AG04450 (cell line): ENCODE measurements at regions of chr6 and their contacts with region 1.

Region 1: GRCh38 chr6:11653028-11653583 is 115.6 kb downstream of the TMEM170B start:
- DNase-seq: peak; percentile 83
- H3K4me3 ChIP-seq: no peak overlapping the region
- H3K27ac ChIP-seq: peak overlapping the region; percentile 89
- H3K27me3 ChIP-seq: no peaks in the 10 kb centered on the region
- CTCF ChIP-seq: no peak

Region 2: DNA sequence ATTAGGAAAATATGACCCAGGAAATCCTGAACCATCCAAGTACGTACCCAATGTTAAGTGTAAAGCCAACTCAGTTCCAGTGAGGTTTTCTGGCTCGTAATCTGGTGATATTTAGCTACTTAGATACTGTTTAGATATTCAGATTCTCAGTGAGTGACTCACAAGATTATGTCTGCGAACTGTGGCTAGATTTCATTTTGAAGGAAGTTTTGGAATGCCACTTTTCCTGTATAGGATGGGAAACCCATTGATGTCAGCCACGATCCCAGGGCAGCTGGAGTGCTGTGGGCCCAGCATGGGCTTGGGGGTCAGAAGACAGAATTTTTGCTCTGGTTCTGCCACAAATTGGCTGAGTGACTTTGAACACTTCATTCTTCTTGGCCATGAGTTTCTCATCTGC is 39.2 kb before region 1 on chr6:
- CTCF ChIA-PET with region 1: interaction called, 10 read pairs
- POLR2A ChIA-PET with region 1: interaction called, 11 read pairs
- DNase-seq: peak; percentile 93
- H3K4me3 ChIP-seq: no peak overlapping the region
- H3K27ac ChIP-seq: peak overlapping the region; percentile 96
- H3K27me3 ChIP-seq: no peaks in the 10 kb centered on the region
- CTCF ChIP-seq: no peak

Region 3: DNA sequence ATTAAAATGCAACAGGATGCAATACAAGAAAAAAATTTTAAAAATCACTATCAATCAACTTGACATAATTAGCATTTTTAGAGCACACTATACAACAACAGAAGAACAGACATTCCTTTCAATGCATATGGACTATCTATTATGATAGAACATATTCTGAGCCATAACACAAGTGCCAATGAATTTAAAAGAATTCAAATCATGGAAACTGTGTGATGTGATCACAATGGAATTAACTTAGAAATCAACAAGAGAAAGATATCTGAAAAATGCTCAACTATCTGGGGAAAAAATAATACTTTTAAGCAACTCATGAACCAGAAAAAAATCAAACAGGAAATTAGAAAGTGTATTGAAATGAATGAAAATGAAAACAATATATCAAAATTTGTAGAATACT is 19.1 kb after region 1 on chr6:
- CTCF ChIA-PET with region 1: interaction called, 14 read pairs
- POLR2A ChIA-PET with region 1: no interaction called
- DNase-seq: no peak
- H3K4me3 ChIP-seq: no peak overlapping the region
- H3K27ac ChIP-seq: no peak overlapping the region
- H3K27me3 ChIP-seq: no peaks in the 10 kb centered on the region
- CTCF ChIP-seq: no peak

Region 4: DNA sequence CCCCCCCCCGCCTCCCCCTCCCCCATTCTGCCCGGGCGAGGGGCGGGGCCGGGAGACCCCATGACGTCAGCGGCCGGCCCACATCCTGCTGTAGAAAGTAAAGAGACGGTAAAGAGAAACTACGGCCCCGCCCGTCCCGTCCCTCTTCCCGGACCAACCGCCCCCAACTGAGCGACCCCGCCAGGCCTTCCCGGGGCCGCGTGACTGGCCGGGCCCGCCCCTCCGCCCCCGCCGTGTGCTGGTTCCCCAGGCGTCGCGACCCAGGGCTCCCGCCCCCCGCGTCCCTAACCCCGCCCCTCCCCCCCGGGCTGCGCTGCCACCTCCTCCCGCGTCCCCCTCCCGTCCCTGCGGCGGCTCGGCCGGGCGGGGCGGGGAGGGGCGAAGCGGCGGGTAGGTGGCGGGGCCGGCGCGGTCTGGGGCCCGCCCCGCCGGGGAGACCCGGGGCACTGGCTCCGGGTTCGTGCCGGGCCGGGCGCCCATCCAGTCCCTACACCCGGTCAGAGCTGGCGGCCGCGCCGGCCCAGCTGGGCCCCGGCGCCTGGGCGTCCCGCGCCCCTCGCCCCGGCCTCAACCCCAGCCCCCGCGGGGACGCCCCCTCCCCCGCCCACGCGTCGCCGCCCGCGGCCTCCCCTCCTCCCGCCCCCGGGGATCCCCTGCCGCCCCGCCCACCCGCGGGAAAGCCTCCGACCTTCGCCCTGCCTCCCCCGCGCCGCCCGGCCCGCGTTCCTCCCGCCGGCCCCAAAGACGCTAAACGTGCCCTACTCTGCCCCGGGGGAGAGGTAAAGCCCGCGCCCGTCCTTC is 358.4 kb after region 1 on chr6:
- CTCF ChIA-PET with region 1: interaction called, 21 read pairs
- POLR2A ChIA-PET with region 1: interaction called, 3 read pairs
- DNase-seq: peak; percentile 91
- H3K4me3 ChIP-seq: peak overlapping the region; percentile 83
- H3K27ac ChIP-seq: no peak overlapping the region
- H3K27me3 ChIP-seq: no peaks in the 10 kb centered on the region
- CTCF ChIP-seq: no peak

Region 5: GRCh38 chr6:12289933-12290820 is 637.1 kb after region 1 on chr6 and contains the start of gene EDN1:
- CTCF ChIA-PET with region 1: interaction called, 28 read pairs
- POLR2A ChIA-PET with region 1: interaction called, 4 read pairs
- DNase-seq: peak; percentile 50
- H3K4me3 ChIP-seq: peak within 1 kb of the TSS; percentile 71
- H3K27ac ChIP-seq: peak within 1 kb of the TSS; percentile 88
- H3K27me3 ChIP-seq: no peaks in the 10 kb centered on the region
- CTCF ChIP-seq: peak; percentile 70
- polyA plus RNA-seq, gene EDN1: 1.7 and 2.1 TPM in 2 replicates